ENCODE measurements at regions of chr20 and their contacts with region 1.

Region 1: DNA sequence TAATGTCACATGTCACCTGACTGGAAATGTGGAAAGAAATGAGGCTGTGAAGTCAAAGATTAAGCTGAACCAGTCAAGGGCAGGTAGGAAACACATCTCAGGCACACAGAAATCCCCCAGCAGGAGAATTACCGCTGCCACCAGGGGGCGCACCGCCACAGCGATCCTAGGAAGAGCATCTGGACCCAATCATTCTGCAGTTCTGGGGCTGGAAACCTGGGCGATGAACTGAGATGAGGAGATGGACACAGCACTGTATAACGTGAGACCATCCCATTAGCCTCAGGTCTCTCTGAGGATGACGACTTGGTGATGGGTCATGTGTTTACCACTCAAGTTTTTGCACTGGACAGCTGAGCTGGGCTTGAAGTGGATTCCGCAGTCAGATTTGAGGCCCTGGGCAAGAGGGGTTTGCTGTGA is 6.5 kb upstream of the SLC24A3 start:
- DNase-seq: peak; percentile 77
- ATAC-seq: no peak
- H3K4me3 Mint-ChIP-seq: no peak overlapping the region
- H3K27ac Mint-ChIP-seq: no peak overlapping the region
- H3K4me1 Mint-ChIP-seq: no peaks in the 10 kb centered on the region
- H3K27me3 Mint-ChIP-seq: peaks cover 35% of the 10 kb centered on the region
- CTCF ChIP-seq: peak; percentile 88

Region 2: GRCh38 chr20:19185090-19185489 is 20.9 kb before region 1 on chr20:
- CTCF ChIA-PET with region 1: no interaction called
- POLR2A ChIA-PET with region 1: no interaction called
- intact Hi-C with region 1: no loop called
- DNase-seq: no peak
- ATAC-seq: no peak
- H3K4me3 Mint-ChIP-seq: no peak overlapping the region
- H3K27ac Mint-ChIP-seq: no peak overlapping the region
- H3K4me1 Mint-ChIP-seq: no peaks in the 10 kb centered on the region
- H3K27me3 Mint-ChIP-seq: peaks cover under 1% of the 10 kb centered on the region
- CTCF ChIP-seq: no peak

Region 3: DNA sequence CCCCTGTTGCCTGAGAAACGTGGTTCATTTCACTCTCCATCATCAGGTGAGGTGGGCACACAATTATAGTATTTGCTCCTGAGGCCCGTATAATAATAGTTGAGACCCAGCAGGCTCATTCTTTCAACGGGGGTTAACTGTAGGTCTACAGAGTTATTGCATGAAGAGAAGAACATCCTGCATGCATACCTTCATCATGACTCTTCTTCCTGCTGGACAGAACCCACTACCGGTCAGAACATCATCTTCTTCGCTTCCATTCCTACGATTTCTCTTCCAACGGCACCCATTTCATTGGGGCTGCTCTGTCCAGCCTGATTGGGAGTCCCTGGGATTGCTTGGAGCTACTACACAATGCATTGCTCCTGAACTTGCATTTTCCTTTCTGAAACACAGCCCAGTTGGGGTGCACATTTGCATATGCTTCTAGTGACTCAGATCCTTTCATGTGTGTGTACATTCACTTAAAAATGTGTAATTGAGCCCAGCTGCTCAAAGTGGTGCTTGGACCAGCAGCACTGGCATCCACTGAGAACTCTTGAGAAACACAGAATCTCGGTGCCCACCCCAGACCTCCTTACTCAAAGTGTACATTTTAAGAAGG is 63.9 kb after region 1 on chr20:
- CTCF ChIA-PET with region 1: no interaction called
- POLR2A ChIA-PET with region 1: no interaction called
- intact Hi-C with region 1: no loop called
- DNase-seq: no peak
- ATAC-seq: no peak
- H3K4me3 Mint-ChIP-seq: no peak overlapping the region
- H3K27ac Mint-ChIP-seq: no peak overlapping the region
- H3K4me1 Mint-ChIP-seq: no peaks in the 10 kb centered on the region
- H3K27me3 Mint-ChIP-seq: peaks cover 3% of the 10 kb centered on the region
- CTCF ChIP-seq: no peak

Region 4: DNA sequence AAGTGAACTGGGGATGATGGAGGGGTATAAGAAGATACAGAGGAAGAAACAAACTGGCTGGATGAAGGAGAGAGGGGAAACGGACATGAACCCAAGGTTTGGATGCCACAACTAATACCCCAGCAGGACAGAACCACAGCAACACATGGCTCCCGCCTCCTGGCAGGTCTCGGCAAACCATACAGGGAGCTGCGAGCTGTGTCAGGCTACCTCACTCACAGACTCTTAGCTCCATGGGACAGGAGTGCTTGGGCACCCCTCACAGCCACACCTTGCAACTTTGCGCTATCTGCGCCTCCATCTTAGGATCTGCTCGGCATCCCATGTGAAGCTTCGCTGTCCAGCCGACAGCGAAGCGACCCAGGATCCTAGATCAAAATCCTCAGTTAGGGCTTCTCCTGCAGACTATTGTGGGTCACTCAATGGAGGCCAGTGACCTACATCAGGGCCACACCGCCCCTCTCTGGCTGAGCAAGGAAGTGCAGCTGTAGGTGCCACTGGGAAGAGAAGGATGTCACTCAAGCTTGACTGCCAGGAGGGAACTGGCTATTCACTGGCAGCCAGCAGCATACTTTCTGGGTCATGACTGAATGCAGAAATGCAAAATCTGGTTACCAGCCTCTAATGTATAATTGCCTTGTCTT is 377.7 kb after region 1 on chr20:
- CTCF ChIA-PET with region 1: interaction called, 21 read pairs
- POLR2A ChIA-PET with region 1: no interaction called
- intact Hi-C with region 1: loop called (anchors 10 kb)
- DNase-seq: peak; percentile 74
- ATAC-seq: peak; percentile 68
- H3K4me3 Mint-ChIP-seq: no peak overlapping the region
- H3K27ac Mint-ChIP-seq: no peak overlapping the region
- H3K4me1 Mint-ChIP-seq: no peaks in the 10 kb centered on the region
- H3K27me3 Mint-ChIP-seq: no peaks in the 10 kb centered on the region
- CTCF ChIP-seq: peak; percentile 57

Region 5: GRCh38 chr20:19661717-19662636 is 456.0 kb after region 1 on chr20:
- CTCF ChIA-PET with region 1: interaction called, 45 read pairs
- POLR2A ChIA-PET with region 1: no interaction called
- intact Hi-C with region 1: loop called (anchors 5 kb)
- DNase-seq: peak; percentile 57
- ATAC-seq: peak; percentile 64
- H3K4me3 Mint-ChIP-seq: no peak overlapping the region
- H3K27ac Mint-ChIP-seq: no peak overlapping the region
- H3K4me1 Mint-ChIP-seq: no peaks in the 10 kb centered on the region
- H3K27me3 Mint-ChIP-seq: peaks cover 23% of the 10 kb centered on the region
- CTCF ChIP-seq: peak; percentile 96